GM10248 (cell line): ENCODE measurements at regions of chr11 and their contacts with region 1.

Region 1: GRCh38 chr11:122578168-122578825 is 77.2 kb upstream of the UBASH3B start:
- DNase-seq: no peak
- CTCF ChIP-seq: no peak

Region 2: GRCh38 chr11:122593473-122594420 is 15.4 kb after region 1 on chr11:
- CTCF ChIA-PET with region 1: interaction called, 13 read pairs
- POLR2A ChIA-PET with region 1: no interaction called
- DNase-seq: no peak
- CTCF ChIP-seq: no peak

Region 3: DNA sequence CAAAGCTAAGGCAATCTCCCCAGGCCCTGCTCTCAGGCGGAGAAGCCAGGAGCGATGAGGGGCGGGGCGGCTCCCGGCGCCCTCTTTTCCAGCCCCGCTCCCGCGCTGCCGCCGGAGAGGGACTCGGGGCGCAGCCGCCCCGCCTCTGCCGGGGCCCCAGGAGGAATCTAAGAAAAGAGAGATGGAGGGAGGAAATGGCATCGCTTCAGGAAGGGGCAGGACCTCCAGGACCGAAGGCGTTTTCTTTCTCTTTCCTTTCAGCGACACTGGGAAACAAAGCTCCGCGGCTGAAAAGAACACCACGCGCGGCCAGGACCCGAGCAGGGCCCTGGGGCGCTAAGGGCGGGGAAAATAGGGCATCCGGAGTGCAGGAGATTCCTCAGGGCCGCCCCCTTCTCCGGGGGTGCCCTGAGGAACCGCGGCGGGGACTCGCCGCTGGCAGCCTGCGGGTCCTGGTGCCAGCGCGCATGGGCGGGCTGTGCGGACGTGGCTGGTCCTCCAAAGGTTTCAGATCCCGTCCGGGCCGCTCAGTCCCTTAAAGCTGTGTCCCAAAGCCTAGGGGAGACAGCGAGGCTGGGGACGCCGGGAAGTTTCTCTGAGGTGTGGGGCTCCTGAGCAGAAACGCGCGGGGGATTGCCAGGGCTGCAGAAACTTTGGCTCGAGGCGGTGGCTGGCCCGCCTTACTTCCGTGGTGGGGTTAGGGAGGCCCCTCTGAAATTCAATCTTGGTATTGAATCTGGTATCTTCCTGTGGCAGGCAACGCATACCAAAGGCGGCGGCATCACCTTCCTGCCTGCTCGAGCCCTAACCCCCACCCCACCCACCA is 406.1 kb after region 1 on chr11:
- CTCF ChIA-PET with region 1: no interaction called
- POLR2A ChIA-PET with region 1: no interaction called
- DNase-seq: no peak
- CTCF ChIP-seq: no peak